Breast epithelium (tissue), 4 donors: ENCODE measurements at regions of chr2 and their contacts with region 1.

Region 1: DNA sequence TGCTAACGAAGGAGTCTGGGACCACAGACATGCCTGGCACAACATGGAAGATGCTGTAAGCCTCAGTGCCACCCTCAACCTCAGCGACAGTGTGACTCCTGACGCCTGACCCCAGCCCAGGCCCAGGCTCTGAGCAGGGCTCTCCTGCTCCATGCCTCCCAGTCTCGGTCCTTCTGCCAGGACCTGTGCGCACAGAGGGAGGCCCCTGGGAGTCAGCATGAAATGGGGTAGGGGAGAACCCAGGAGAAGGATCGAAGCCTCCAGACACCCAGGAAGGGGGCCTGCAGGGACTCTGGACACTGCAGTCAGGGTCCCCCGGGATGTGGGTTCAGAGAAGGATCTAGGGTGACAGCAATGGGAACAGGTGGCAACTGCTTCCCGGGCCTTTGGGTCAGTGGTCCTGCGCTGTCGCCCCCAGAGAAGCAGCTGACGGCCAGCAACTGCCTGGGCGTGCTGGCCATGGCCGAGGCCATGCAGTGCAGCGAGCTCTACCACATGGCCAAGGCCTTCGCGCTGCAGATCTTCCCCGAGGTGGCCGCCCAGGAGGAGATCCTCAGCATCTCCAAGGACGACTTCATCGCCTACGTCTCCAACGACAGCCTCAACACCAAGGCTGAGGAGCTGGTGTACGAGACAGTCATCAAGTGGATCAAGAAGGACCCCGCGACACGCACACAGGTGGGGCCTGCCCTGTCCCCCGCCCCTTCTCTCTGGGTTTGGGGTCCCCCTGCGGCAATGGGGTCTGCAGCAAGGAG is 233.9 kb downstream of the ATAD2B start:
- DNase-seq: no peak
- H3K4me3 ChIP-seq: no peak overlapping the region
- H3K27ac ChIP-seq: no peak overlapping the region
- H3K4me1 ChIP-seq: no peaks in the 10 kb centered on the region
- H3K27me3 ChIP-seq: no peaks in the 10 kb centered on the region
- CTCF ChIP-seq: no peak
- POLR2A ChIP-seq: no peak

Region 2: DNA sequence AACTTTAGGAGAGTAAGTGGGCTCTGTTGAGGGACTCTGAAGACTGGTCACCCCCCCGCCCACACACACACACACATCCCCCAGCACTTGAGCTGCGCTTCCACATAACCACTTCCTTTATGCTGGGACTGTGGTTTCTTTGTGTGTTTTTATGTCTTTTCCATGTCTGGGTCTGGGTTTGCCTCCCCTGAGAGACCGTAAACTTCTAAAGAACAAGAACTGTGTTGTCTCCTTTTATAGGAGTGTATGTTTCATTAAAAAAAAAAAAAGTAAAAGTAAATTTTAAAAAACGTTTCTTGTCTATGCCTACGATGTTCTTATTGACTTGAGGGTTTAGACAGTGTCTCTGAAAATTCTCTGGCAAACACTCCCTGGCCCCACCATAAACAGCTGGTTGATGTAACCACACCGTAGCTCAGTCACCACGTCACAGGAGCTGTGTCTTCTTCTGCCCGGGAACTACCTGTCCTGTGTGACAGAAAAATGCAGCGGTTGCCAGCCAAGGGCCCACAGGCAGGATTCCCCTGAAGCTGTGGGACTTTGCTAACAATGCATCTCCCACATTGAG is 240.1 kb before region 1 on chr2:
- intact Hi-C with region 1: loop called (anchors 5 kb)
- DNase-seq: peak in 1 of 2 donors; percentile 84
- H3K4me3 ChIP-seq: no peak overlapping the region
- H3K27ac ChIP-seq: peak overlapping the region in 1 of 2 donors; percentile 12
- H3K4me1 ChIP-seq: no peaks in the 10 kb centered on the region
- H3K27me3 ChIP-seq: peaks cover 0 to 2% of the 10 kb centered on the region in 2 donors
- CTCF ChIP-seq: no peak
- POLR2A ChIP-seq: no peak

Region 3: GRCh38 chr2:23843051-23843976 is 150.3 kb after region 1 on chr2:
- intact Hi-C with region 1: no loop called
- DNase-seq: no peak
- H3K4me3 ChIP-seq: no peak overlapping the region
- H3K27ac ChIP-seq: no peak overlapping the region
- H3K4me1 ChIP-seq: no peaks in the 10 kb centered on the region
- H3K27me3 ChIP-seq: no peaks in the 10 kb centered on the region
- CTCF ChIP-seq: no peak
- POLR2A ChIP-seq: no peak